ENCODE measurements at regions of chr5 and their contacts with region 1.

Region 1: DNA sequence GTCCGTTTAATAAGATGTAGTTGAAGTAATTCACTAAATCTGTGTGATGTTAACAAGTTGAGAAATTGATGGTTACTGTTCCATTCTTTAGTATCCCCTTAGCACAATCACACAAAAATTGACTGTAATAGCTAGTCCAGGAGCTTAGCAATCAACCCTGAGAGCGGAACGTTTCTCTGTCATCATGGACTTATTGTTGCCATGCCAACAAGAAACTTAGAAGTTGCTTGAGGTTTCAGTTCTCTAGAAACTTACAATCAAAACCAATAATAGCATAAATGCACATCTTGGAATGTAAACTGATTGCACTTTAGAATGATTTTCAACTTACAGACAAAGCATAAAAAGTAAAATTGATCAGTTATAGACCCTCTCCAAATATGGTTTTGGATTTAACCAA is 125.4 kb upstream of the ANKH start:
- DNase-seq: no peak
- ATAC-seq: no peak
- H3K4me3 ChIP-seq: no peak overlapping the region
- H3K27ac ChIP-seq: no peak overlapping the region
- H3K4me1 ChIP-seq: no peaks in the 10 kb centered on the region
- H3K27me3 ChIP-seq: no peaks in the 10 kb centered on the region

Region 2: GRCh38 chr5:14676320-14676719 is 320.7 kb before region 1 on chr5:
- intact Hi-C with region 1: no loop called
- DNase-seq: peak in 1 of 3 donors; percentile 49
- ATAC-seq: peak; percentile 59 to 65
- H3K4me3 ChIP-seq: no peak overlapping the region
- H3K27ac ChIP-seq: peak overlapping the region; percentile 47
- H3K4me1 ChIP-seq: peaks cover 29% of the 10 kb centered on the region
- H3K27me3 ChIP-seq: no peaks in the 10 kb centered on the region

Region 3: GRCh38 chr5:14818931-14819790 is 177.8 kb before region 1 on chr5:
- intact Hi-C with region 1: no loop called
- DNase-seq: no peak
- ATAC-seq: no peak
- H3K4me3 ChIP-seq: no peak overlapping the region
- H3K27ac ChIP-seq: no peak overlapping the region
- H3K4me1 ChIP-seq: peaks cover 6% of the 10 kb centered on the region
- H3K27me3 ChIP-seq: no peaks in the 10 kb centered on the region

Region 4: DNA sequence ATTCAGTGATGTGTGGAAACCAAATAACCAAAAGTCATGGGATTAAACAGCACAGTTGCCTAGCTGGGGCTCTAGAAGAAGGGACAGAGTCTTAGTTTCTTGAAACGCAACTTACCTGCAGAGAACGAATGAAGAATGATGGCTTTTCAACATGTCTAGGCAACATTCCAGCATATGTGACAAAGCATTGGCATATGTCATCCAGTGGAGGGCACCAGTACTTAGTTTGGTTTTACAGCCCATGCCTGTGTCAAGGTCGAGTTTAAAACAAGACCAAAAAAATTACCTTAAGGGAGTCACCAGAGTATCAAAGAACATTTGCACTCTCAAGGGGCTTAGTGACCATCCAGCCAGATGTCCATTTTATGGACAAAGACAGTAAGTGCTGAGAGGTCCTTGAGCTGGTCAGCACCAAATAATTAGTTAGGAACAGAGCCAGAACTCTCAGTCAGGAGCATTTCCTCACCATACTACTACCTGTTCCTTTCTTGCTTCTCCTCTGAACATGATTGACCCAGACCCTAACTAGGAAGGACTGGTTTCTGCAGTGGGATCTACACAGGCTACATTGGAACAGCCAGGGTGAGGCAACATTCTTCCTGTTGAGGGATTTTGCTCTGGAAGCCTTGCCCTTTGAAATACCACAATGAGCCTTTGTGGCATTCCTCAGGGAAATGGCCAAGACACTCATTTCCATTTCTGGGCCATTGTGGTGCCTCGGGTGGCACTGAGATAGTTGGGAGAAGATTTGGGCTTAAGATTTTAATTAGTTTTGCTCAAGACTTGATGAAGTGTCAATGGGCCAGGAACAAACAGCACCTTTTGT is 50.0 kb before region 1 on chr5:
- intact Hi-C with region 1: loop called in 3 of 4 experiments (anchors 5 to 10 kb)
- DNase-seq: no peak
- ATAC-seq: peak; percentile 51
- H3K4me3 ChIP-seq: no peak overlapping the region
- H3K27ac ChIP-seq: no peak overlapping the region
- H3K4me1 ChIP-seq: peaks cover 3% of the 10 kb centered on the region
- H3K27me3 ChIP-seq: no peaks in the 10 kb centered on the region